B cell (primary cell): ENCODE measurements at regions of chr9 and their contacts with region 1.

Region 1: DNA sequence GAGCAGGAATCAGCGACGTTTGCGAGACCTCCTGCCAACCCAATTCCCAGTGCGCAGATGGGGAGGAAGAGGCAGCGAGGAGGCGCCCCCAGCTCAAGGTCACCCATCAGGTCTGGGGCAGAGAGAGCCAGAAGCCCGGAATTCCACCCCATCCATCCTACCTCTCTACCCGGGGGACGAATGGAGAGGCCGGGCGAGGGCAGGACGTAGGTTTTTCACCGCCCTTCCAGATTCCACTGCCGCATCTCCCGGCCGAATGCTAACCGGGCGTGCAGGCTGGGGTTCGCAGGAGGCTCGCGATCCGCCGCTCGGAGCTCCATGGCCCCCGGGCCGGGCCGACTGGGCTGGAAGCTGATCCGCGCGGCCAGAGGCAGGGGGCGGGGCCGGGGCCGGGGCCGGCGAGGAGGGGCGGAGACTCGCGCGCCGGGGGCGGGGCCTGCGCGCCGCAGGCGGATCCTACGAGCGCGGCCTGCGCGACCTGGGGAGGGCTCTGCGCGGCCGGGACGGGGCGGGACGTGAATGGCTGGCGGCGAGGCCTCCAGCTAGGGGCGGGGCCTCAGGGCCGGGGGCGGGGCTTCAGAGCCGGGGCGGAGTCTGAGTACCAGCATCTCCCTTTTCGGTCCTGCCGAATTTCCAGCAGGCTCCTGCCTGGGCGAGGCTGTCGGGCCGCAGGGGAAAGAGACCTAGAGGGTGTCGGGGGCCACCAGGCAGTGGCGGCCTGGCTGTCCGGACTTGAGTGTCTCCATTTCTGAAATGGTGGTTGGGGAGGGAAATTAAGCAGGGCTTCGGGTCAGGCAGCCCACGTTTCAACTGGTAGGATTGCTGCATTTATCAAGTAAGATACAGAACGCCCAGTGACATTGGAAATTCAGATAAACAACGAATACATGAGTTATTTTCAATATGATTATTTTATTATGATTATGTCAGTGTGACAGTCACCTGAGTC is at the start of gene ST6GALNAC4:
- DNase-seq: peak; percentile 95
- ATAC-seq: peak; percentile 82
- H3K4me3 ChIP-seq: peak within 1 kb of the TSS; percentile 71 to 99 (median 79)
- H3K4me3 Mint-ChIP-seq: peak within 1 kb of the TSS; percentile 94
- H3K27ac ChIP-seq: peak within 1 kb of the TSS; percentile 89 to 91
- H3K27ac Mint-ChIP-seq: peak within 1 kb of the TSS; percentile 98
- H3K4me1 ChIP-seq: peaks cover 44 to 77% of the 10 kb centered on the region in 2 donors
- H3K4me1 Mint-ChIP-seq: peaks cover 68% of the 10 kb centered on the region
- H3K27me3 ChIP-seq: peaks cover 0 to 2% (median 0%) of the 10 kb centered on the region in 4 experiments
- H3K27me3 Mint-ChIP-seq: no peaks in the 10 kb centered on the region
- CTCF ChIP-seq: no peak
- total RNA-seq, gene ST6GALNAC4: 198 and 199 TPM in 2 replicates

Region 2: GRCh38 chr9:127224178-127224882 is 692.6 kb before region 1 on chr9:
- CTCF ChIA-PET with region 1: no interaction called
- POLR2A ChIA-PET with region 1: no interaction called
- intact Hi-C with region 1: loop called (anchors 2 kb)
- DNase-seq: peak; percentile 94
- ATAC-seq: peak; percentile 73
- H3K4me3 ChIP-seq: peak overlapping the region in 4 of 5 experiments; percentile 39 to 75 (median 52)
- H3K4me3 Mint-ChIP-seq: peak overlapping the region; percentile 93
- H3K27ac ChIP-seq: peak overlapping the region in 1 of 2 donors; percentile 39
- H3K27ac Mint-ChIP-seq: peak overlapping the region; percentile 95
- H3K4me1 ChIP-seq: peaks cover 21 to 33% of the 10 kb centered on the region in 2 donors
- H3K4me1 Mint-ChIP-seq: peaks cover 43% of the 10 kb centered on the region
- H3K27me3 ChIP-seq: peaks cover 0 to 9% (median 3%) of the 10 kb centered on the region in 4 experiments
- H3K27me3 Mint-ChIP-seq: peaks cover 4% of the 10 kb centered on the region
- CTCF ChIP-seq: no peak

Region 3: GRCh38 chr9:127611899-127612790 is 304.8 kb before region 1 on chr9 and contains the start of gene STXBP1:
- CTCF ChIA-PET with region 1: interaction called, 3 read pairs
- POLR2A ChIA-PET with region 1: no interaction called
- intact Hi-C with region 1: loop called (anchors 5 kb)
- DNase-seq: peak; percentile 91
- ATAC-seq: peak; percentile 94
- H3K4me3 ChIP-seq: peak within 1 kb of the TSS; percentile 55 to 84 (median 60)
- H3K4me3 Mint-ChIP-seq: peak within 1 kb of the TSS; percentile 98
- H3K27ac ChIP-seq: no peak within 1 kb of the TSS
- H3K27ac Mint-ChIP-seq: peak within 1 kb of the TSS; percentile 80
- H3K4me1 ChIP-seq: peaks cover 28 to 31% of the 10 kb centered on the region in 2 donors
- H3K4me1 Mint-ChIP-seq: peaks cover 25% of the 10 kb centered on the region
- H3K27me3 ChIP-seq: peaks cover 0 to 39% (median 33%) of the 10 kb centered on the region in 4 experiments
- H3K27me3 Mint-ChIP-seq: peaks cover 44% of the 10 kb centered on the region
- CTCF ChIP-seq: no peak
- total RNA-seq, gene STXBP1: 0.62 and 0.78 TPM in 2 replicates

Region 4: DNA sequence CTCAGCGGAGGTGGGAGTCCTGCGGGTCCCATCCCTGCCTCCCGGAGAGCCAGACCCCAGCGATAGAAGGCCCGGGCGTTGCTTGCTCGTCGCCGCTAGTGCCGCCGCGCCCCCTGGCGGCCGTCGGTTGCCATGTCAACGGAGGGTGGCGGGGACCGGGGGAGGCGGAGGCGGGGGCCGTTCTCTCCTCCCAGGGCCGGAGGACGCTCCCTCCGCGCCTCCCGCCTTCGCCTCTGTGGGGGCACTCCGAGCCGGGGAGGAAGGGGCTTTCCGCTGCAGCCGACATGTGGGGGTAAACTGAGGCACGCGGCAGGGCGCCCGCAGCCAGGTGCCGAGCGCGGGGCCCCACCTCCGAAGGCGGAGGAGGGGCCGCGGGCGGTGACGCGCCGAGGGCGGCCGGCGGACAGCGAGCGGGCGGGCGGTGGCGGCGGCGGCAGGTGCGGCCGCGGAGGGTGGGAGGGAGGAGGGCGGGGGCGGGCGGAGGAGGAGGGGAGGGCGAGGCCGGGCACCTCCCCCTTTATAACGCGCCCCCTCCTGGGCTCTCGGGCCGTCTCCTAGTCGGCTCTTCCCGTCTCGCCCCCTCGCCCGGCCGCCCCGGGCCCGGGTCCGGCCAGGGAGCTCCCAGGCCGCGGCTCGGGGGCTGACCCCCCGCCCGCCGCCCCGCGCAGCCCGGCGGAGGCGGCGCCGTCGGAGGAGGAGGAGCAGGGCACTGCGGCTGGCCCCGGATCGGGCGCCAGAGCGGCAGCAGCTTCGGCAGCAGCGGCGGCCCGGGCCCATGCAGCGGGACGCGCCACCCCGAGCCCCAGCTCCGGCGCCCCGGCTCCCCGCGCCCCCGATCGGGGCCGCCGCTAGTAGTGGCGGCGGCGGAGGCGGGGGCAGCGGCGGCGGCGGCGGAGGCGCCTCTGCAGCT is 131.7 kb before region 1 on chr9:
- CTCF ChIA-PET with region 1: interaction called, 33 read pairs
- POLR2A ChIA-PET with region 1: interaction called, 3 read pairs
- intact Hi-C with region 1: loop called (anchors 1 kb)
- DNase-seq: peak; percentile 95
- ATAC-seq: peak; percentile 62
- H3K4me3 ChIP-seq: peak overlapping the region in 4 of 5 experiments; percentile 48 to 99 (median 92)
- H3K4me3 Mint-ChIP-seq: peak overlapping the region; percentile 90
- H3K27ac ChIP-seq: peak overlapping the region; percentile 91 to 95
- H3K27ac Mint-ChIP-seq: peak overlapping the region; percentile 98
- H3K4me1 ChIP-seq: peaks cover 44 to 60% of the 10 kb centered on the region in 2 donors
- H3K4me1 Mint-ChIP-seq: peaks cover 56% of the 10 kb centered on the region
- H3K27me3 ChIP-seq: no peaks in the 10 kb centered on the region
- H3K27me3 Mint-ChIP-seq: no peaks in the 10 kb centered on the region
- CTCF ChIP-seq: peak; percentile 80

Region 5: DNA sequence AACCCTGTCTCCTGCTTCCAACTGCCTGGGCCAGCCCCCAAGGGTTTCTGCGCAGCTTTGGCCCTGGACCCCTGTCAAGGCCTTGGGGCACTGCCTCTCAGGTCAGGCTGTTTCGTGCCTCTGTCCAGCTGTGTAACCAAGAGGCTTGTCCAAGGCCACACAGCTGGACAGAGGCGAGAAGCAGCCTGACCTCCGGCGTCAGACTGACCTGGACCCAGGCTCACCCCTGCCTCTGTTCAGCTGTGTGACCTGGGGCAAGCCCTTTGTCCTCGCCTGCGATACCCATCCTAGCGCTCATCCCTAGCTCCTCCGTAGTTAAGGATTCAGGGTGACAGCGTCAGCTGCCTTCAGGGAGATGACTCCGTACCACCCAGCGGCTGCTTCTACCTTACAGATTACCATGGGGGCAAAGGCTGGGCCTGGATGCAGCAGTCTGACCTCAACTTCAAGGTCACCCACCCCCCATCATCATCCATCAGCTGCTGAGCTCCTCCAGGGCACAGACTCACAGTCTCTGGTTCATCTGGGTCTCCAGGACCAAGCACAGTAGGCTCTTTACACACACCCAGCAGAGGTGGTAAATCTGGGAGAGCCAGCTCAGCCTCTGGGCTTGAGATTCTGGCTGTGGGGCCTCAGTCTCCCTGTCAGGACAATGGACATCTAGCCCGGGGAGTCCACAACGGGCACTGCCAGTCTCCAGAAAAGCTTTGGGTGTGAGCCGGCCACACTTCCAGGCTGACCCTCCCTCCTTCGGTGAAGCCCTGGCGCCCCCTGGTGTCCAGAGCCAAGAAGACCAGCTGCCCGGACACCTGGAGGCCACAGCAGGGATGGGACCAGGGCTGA is 47.4 kb before region 1 on chr9:
- CTCF ChIA-PET with region 1: interaction called, 237 read pairs
- POLR2A ChIA-PET with region 1: interaction called, 6 read pairs
- intact Hi-C with region 1: loop called (anchors 2 kb)
- DNase-seq: peak; percentile 85
- ATAC-seq: peak; percentile 76
- H3K4me3 ChIP-seq: no peak overlapping the region
- H3K4me3 Mint-ChIP-seq: no peak overlapping the region
- H3K27ac ChIP-seq: no peak overlapping the region
- H3K27ac Mint-ChIP-seq: peak overlapping the region; percentile 53
- H3K4me1 ChIP-seq: peaks cover 16 to 29% of the 10 kb centered on the region in 2 donors
- H3K4me1 Mint-ChIP-seq: peaks cover 25% of the 10 kb centered on the region
- H3K27me3 ChIP-seq: no peaks in the 10 kb centered on the region
- H3K27me3 Mint-ChIP-seq: no peaks in the 10 kb centered on the region
- CTCF ChIP-seq: peak; percentile 92

Region 6: DNA sequence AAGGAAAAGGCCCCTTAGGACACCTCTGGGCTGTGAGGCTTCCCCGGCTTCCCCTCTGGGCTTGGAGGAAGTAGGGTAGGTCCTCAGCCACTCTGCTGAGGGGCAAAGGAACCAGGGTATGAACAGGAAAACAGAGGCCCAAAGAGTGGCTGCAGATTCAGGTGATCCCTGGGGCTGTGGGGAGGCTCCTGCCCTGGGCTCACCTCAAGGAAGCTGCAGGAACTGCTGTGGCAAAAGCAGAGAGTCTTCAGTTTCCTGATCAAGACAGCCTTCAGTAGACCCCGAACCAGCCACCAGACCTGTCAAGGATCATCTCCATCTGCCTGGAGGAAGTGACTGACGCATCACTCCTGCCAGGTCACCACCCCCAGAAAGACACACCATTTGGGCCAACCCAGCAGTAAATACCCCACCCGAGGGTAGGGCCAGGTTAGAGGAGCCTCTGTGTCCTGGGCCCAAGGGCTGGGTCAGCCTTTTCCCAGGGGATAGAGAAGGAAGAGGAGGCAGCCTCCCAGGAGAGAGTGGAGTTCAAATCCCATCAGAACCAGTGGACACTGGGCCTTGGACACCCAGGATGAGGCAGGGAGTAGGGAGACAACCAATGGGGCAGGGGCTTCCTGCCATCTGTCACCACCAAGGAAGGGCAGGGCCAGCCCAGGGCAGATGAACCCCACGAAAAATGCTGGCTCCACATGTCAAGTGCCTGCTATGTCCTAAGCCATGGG is 11.8 kb before region 1 on chr9:
- CTCF ChIA-PET with region 1: interaction called, 81 read pairs
- POLR2A ChIA-PET with region 1: interaction called, 228 read pairs
- intact Hi-C with region 1: loop called (anchors 1 kb)
- DNase-seq: peak; percentile 79
- ATAC-seq: peak; percentile 43
- H3K4me3 ChIP-seq: peak overlapping the region in 4 of 5 experiments; percentile 27 to 63 (median 33)
- H3K4me3 Mint-ChIP-seq: peak overlapping the region; percentile 92
- H3K27ac ChIP-seq: peak overlapping the region; percentile 96 to 100
- H3K27ac Mint-ChIP-seq: peak overlapping the region; percentile 100
- H3K4me1 ChIP-seq: peaks cover 52 to 79% of the 10 kb centered on the region in 2 donors
- H3K4me1 Mint-ChIP-seq: peaks cover 59% of the 10 kb centered on the region
- H3K27me3 ChIP-seq: no peaks in the 10 kb centered on the region
- H3K27me3 Mint-ChIP-seq: no peaks in the 10 kb centered on the region
- CTCF ChIP-seq: no peak